Activated CD4-positive, alpha-beta T cell treated with anti-CD3 and anti-CD28 coated beads, Interleukin-2, amount 10 ng/mL, durations not matched to agents 24 days and 14 days (primary cell): ENCODE measurements at regions of chr11 and their contacts with region 1.

Region 1: GRCh38 chr11:123815122-123815521 is 9.0 kb upstream of the OR6M1 start:
- DNase-seq: no peak
- H3K4me3 Mint-ChIP-seq: no peak overlapping the region
- H3K27ac Mint-ChIP-seq: no peak overlapping the region
- H3K4me1 Mint-ChIP-seq: no peaks in the 10 kb centered on the region
- H3K27me3 Mint-ChIP-seq: peaks cover 13% of the 10 kb centered on the region

Region 2: GRCh38 chr11:123351375-123351774 is 463.7 kb before region 1 on chr11:
- intact Hi-C with region 1: no loop called
- DNase-seq: no peak
- H3K4me3 Mint-ChIP-seq: no peak overlapping the region
- H3K27ac Mint-ChIP-seq: no peak overlapping the region
- H3K4me1 Mint-ChIP-seq: peaks cover 10% of the 10 kb centered on the region
- H3K27me3 Mint-ChIP-seq: peaks cover 3% of the 10 kb centered on the region

Region 3: DNA sequence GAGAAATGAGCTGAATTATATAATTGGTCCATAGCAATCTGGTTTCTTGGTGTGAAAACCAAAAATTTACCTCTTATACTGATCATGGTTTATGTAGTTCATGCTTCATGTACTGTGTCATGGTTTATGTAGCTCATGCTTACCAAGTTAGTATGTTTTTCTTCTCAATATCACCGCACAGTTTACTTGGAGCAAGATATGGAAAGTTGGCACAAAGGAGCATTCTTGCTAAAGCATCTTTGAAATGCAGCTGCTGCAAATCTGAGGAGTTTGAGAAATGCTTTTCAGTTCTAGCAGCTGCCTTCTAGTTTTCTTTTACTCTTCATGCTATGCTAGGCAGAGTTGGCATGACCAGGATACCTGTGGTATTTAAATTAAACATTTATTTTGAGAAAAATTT is 221.5 kb after region 1 on chr11:
- intact Hi-C with region 1: loop called (anchors 10 kb)
- DNase-seq: no peak
- H3K4me3 Mint-ChIP-seq: no peak overlapping the region
- H3K27ac Mint-ChIP-seq: no peak overlapping the region
- H3K4me1 Mint-ChIP-seq: no peaks in the 10 kb centered on the region
- H3K27me3 Mint-ChIP-seq: peaks cover 2% of the 10 kb centered on the region